ENCODE measurements at regions of chr1 and their contacts with region 1.

Region 1: GRCh38 chr1:210301615-210302000 is 27.1 kb upstream of the HHAT start:
- DNase-seq: peak in 1 of 3 donors; percentile 50
- ATAC-seq: peak; percentile 20 to 43
- H3K4me3 ChIP-seq: no peak overlapping the region
- H3K27ac ChIP-seq: no peak overlapping the region
- H3K4me1 ChIP-seq: peaks cover 3% of the 10 kb centered on the region
- H3K27me3 ChIP-seq: no peaks in the 10 kb centered on the region

Region 2: GRCh38 chr1:210250998-210251679 is 50.5 kb before region 1 on chr1:
- intact Hi-C with region 1: loop called in 1 of 4 experiments (anchors 10 kb)
- DNase-seq: peak; percentile 63 to 87 (median 85)
- ATAC-seq: peak; percentile 76
- H3K4me3 ChIP-seq: peak overlapping the region; percentile 52
- H3K27ac ChIP-seq: no peak overlapping the region
- H3K4me1 ChIP-seq: peaks cover 4% of the 10 kb centered on the region
- H3K27me3 ChIP-seq: no peaks in the 10 kb centered on the region